ENCODE measurements at regions of chr19 and their contacts with region 1.

Region 1: GRCh38 chr19:18985257-18985656 is 44.2 kb upstream of the HOMER3 start:
- DNase-seq: peak in 2 of 10 donors; percentile 27 to 37

Region 2: GRCh38 chr19:18940769-18941407 is 44.4 kb before region 1 on chr19 and contains the start of gene HOMER3:
- intact Hi-C with region 1: loop called (anchors 5 kb)
- DNase-seq: peak in 9 of 10 donors; percentile 45 to 95 (median 78)

Region 3: GRCh38 chr19:19053508-19054314 is 68.5 kb after region 1 on chr19:
- intact Hi-C with region 1: loop called (anchors 2 kb)
- DNase-seq: peak in 9 of 10 donors; percentile 44 to 96 (median 71)

Region 4: DNA sequence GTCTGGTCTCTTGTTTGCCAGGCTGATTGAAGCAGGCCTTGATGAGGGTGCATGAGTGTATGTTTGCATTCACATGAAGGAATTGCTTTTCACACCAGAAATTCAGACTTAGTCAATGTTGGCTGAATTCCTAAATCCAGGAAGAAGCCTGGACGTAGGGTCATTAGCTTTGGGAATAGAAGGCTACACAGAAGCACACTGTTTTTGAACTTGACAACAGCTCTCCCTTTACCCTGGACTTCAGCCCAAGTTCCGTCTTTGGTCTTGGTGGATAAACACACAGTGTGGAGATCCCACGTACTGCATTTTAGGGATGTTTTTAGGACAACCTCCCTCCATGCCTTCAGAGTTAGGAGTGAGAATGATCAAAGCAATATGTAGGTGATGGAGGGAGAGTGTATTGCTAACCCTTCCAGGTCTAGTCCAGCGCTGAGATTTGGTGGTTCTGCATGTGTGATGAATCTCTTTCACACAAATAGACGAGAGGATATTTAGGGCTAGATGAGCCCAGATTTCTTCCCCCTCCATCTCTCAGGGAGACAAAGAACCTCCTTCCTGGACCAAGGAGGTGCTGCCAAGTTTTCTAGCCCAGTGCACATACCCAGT is 265.0 kb after region 1 on chr19:
- intact Hi-C with region 1: no loop called
- DNase-seq: no peak